HCT116 (cell line): ENCODE measurements at regions of chr15 and their contacts with region 1.

Region 1: DNA sequence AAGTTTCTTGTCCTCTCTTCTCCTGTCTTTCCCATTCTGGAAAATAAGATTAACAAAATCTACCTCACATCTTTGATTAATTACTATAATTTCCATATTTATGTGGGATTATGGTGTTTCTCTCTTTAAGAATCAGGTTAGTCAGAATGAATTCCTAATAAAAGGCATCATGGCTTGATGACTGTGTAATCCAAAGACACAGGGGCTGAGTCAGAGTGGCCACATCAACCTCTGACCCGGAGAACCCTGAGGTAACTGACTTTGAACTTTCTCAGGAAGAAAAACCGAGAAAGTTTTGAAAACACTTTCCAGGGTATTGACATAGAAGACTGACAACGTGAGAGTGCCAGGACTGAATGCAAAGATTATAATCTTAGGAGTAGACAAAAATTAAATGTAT is 170.3 kb upstream of the MCTP2 start:
- DNase-seq: no peak
- ATAC-seq: no peak
- H3K4me3 ChIP-seq: no peak overlapping the region
- H3K27ac ChIP-seq: no peak overlapping the region
- H3K4me1 ChIP-seq: no peaks in the 10 kb centered on the region
- H3K27me3 ChIP-seq: 0 out of 2 replicates have a peak, but pooled peaks cover 6% of the 10 kb centered on the region
- CTCF ChIP-seq: no peak
- POLR2A ChIP-seq: no peak
- RAD21 ChIP-seq: no peak

Region 2: GRCh38 chr15:93603550-93603949 is 457.5 kb before region 1 on chr15:
- CTCF ChIA-PET with region 1: no interaction called
- POLR2A ChIA-PET with region 1: no interaction called
- RAD21 ChIA-PET with region 1: no interaction called
- intact Hi-C with region 1: loop called (anchors 5 kb)
- DNase-seq: no peak
- ATAC-seq: no peak
- H3K4me3 ChIP-seq: no peak overlapping the region
- H3K27ac ChIP-seq: no peak overlapping the region
- H3K4me1 ChIP-seq: no peaks in the 10 kb centered on the region
- H3K27me3 ChIP-seq: no peaks in the 10 kb centered on the region
- CTCF ChIP-seq: no peak
- POLR2A ChIP-seq: no peak
- RAD21 ChIP-seq: no peak

Region 3: DNA sequence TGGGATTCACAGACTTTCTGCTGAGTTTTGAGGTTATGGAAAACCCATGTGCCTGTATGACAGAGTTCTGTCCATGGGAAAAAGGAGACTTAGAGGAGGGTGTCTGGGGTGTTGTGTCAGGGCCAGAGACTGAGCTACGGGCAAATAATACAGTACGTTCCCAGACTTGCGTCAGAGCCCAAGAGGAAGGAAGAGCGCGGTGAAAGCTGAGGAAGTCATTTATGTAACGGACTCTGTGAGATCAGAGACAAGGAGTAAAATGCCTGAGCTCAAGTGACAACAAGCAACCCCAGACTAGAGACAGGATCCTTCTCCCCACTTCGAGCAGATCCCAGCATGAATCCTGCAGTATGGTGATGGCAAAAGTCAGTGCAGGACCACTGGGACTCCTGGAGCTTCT is 198.2 kb before region 1 on chr15:
- CTCF ChIA-PET with region 1: no interaction called
- POLR2A ChIA-PET with region 1: no interaction called
- RAD21 ChIA-PET with region 1: no interaction called
- intact Hi-C with region 1: no loop called
- DNase-seq: no peak
- ATAC-seq: no peak
- H3K4me3 ChIP-seq: no peak overlapping the region
- H3K27ac ChIP-seq: no peak overlapping the region
- H3K4me1 ChIP-seq: no peaks in the 10 kb centered on the region
- H3K27me3 ChIP-seq: no peaks in the 10 kb centered on the region
- CTCF ChIP-seq: no peak
- POLR2A ChIP-seq: no peak
- RAD21 ChIP-seq: no peak